ENCODE measurements at regions of chr20 and their contacts with region 1.

Region 1: GRCh38 chr20:57473246-57474048 is 51.5 kb downstream of the CTCFL start:
- DNase-seq: peak; percentile 24
- ATAC-seq: peak; percentile 66
- H3K4me3 Mint-ChIP-seq: peak overlapping the region; percentile 62
- H3K27ac Mint-ChIP-seq: peak overlapping the region; percentile 63
- H3K4me1 Mint-ChIP-seq: peaks cover 87% of the 10 kb centered on the region
- H3K27me3 Mint-ChIP-seq: peaks cover 5% of the 10 kb centered on the region
- CTCF ChIP-seq: no peak

Region 2: DNA sequence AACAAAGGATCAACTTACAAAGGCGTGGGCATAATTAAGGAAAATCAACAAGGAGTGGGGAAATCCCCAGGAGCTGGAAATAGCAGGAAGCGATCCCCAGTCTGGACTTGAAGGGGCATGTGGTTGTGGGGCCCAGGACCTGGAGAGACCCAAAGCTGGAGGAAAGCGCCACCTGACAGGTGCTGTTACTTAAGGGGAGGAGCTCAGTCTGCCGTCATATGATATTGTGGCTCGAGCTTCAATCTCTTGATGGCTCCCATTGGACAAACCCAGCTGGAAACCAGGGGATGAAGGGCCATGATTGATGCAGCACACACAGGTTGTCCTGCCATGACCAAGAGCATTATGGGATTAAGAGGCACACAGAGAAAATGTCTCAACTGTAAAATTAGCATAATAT is 1166.5 kb before region 1 on chr20:
- CTCF ChIA-PET with region 1: no interaction called
- POLR2A ChIA-PET with region 1: no interaction called
- intact Hi-C with region 1: no loop called
- DNase-seq: no peak
- ATAC-seq: no peak
- H3K4me3 Mint-ChIP-seq: no peak overlapping the region
- H3K27ac Mint-ChIP-seq: no peak overlapping the region
- H3K4me1 Mint-ChIP-seq: no peaks in the 10 kb centered on the region
- H3K27me3 Mint-ChIP-seq: peaks cover 2% of the 10 kb centered on the region
- CTCF ChIP-seq: no peak

Region 3: DNA sequence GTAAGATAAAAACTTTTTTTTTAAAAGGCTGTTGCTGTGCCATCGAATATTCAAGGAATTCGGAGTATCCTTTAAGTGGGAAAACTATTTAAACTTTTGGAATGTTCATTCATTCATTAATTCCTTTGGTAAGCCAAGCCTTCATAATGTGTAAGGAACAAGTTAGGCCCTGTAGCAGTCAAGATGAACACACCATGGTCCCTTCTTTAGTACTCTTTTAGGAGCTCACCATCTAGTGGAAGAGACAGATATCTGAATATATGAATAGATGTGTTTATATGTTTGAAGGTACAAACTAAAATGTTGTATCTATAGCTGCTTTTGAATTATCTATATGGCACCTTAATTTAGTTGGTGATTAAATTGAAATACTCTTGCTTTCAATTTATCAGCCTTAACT is 138.1 kb before region 1 on chr20:
- CTCF ChIA-PET with region 1: no interaction called
- POLR2A ChIA-PET with region 1: no interaction called
- intact Hi-C with region 1: no loop called
- DNase-seq: no peak
- ATAC-seq: no peak
- H3K4me3 Mint-ChIP-seq: no peak overlapping the region
- H3K27ac Mint-ChIP-seq: no peak overlapping the region
- H3K4me1 Mint-ChIP-seq: no peaks in the 10 kb centered on the region
- H3K27me3 Mint-ChIP-seq: peaks cover 30% of the 10 kb centered on the region
- CTCF ChIP-seq: no peak

Region 4: DNA sequence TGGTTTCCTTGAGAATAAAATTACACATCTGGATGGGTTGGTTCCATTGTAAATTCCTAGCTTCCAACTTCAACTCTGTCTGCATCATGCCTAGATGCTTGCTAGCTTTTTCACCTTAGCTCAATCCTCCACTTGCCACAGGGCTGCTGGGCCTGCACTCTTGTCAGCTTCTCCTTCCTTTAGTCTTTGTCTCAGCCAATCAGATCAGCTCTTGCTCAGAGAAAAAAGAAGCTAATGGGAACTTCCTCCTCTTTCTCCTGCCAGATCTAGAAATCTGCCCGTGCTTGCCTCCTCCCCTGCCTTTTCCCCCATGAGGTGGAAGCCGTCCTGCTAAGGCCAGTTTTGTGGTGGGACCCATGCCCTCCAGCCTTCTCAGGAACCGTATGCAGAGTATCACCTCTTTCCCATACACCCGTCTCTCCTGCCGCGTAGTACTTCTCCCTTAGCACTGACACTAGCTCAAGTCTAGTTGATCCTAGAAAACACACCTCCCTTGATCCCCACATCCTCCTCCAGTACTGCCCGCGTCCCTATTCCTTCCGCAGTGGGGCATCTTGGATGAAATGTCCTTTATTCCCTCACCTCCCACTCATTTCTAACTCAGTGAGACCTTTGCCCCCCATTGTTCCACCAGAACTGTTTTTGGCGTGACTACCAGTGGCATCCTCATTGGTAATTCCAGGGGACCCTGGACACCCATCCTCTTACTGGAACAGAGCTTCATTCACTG is 103.7 kb before region 1 on chr20:
- CTCF ChIA-PET with region 1: no interaction called
- POLR2A ChIA-PET with region 1: no interaction called
- intact Hi-C with region 1: no loop called
- DNase-seq: no peak
- ATAC-seq: no peak
- H3K4me3 Mint-ChIP-seq: no peak overlapping the region
- H3K27ac Mint-ChIP-seq: no peak overlapping the region
- H3K4me1 Mint-ChIP-seq: no peaks in the 10 kb centered on the region
- H3K27me3 Mint-ChIP-seq: no peaks in the 10 kb centered on the region
- CTCF ChIP-seq: no peak

Region 5: DNA sequence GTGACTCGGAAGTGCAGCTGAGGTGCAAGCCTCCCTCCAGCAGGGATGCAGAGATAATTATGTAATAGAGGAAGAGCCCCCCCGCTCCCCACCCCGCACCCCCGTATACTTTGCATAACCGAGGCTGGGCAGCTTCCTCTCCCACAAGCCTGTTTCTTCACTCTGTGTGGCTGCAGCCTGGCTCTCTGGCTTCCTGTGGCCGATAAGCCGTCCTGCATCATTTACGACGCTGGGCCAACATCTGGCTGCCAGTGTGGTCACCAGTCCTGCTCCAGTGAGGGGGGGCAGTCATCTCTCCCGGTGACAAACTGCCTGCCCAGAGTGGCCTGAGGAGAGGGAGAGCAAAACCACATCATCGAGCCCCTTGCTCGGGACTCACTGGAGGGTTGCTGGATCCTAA is 23.0 kb before region 1 on chr20:
- CTCF ChIA-PET with region 1: interaction called, 3 read pairs
- POLR2A ChIA-PET with region 1: interaction called, 7 read pairs
- intact Hi-C with region 1: loop called (anchors 1 kb)
- DNase-seq: peak; percentile 32
- ATAC-seq: peak; percentile 78
- H3K4me3 Mint-ChIP-seq: peak overlapping the region; percentile 69
- H3K27ac Mint-ChIP-seq: peak overlapping the region; percentile 63
- H3K4me1 Mint-ChIP-seq: peaks cover 65% of the 10 kb centered on the region
- H3K27me3 Mint-ChIP-seq: no peaks in the 10 kb centered on the region
- CTCF ChIP-seq: no peak

Region 6: DNA sequence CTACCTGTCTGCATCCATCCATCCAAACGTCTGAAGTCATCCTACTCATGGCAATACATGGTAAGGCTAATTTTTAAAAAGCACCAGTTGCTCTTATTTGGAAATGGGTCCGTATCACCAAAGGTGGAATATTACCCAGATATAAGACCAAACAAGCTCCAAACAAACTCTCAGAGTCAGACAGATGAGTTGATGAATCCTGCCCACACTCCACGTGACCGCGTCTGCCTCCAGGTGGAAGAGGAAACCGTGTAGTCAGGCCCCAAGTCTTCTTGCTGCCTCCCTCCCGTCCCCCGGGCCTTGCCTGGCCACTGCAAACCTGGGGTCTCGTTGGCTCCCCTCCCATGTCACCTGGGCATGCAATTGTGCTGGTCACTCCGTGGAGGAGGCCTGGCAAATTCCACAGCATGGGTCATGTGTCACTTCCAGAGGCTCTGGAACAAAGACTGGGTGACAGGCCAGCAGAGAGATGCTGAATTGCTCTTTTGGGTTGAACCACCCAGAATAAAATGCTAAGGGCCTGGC is 19.7 kb after region 1 on chr20:
- CTCF ChIA-PET with region 1: interaction called, 12 read pairs
- POLR2A ChIA-PET with region 1: interaction called, 5 read pairs
- intact Hi-C with region 1: loop called (anchors 2 kb)
- DNase-seq: no peak
- ATAC-seq: no peak
- H3K4me3 Mint-ChIP-seq: no peak overlapping the region
- H3K27ac Mint-ChIP-seq: no peak overlapping the region
- H3K4me1 Mint-ChIP-seq: peaks cover 35% of the 10 kb centered on the region
- H3K27me3 Mint-ChIP-seq: no peaks in the 10 kb centered on the region
- CTCF ChIP-seq: no peak